ENCODE measurements at regions of chr5 and their contacts with region 1.

Region 1: GRCh38 chr5:162641142-162641813 is 573.7 kb downstream of the GABRG2 start:
- DNase-seq: no peak
- H3K4me3 ChIP-seq: no peak overlapping the region
- H3K27ac ChIP-seq: no peak overlapping the region
- H3K4me1 ChIP-seq: no peaks in the 10 kb centered on the region
- H3K27me3 ChIP-seq: no peaks in the 10 kb centered on the region
- CTCF ChIP-seq: no peak
- EP300 ChIP-seq: no peak
- POLR2A ChIP-seq: no peak

Region 2: DNA sequence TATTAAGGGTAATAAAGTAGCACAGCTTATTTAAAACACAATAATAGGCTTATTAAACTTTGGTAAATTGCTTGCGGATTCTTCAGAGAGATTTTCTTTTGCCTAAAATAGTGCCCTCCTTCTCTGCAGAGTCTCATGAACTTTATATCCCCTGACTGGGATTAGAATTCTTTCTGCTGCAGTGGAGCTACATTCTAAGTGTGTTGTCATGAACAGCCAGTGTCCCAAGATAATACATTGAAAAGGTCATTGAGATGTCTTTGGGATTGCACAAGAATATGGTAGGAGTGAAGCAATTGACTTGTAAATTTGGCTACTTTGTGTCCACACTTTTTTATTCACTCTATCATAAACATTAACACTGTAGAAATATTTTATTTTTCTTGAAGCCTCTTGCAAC is 30.8 kb after region 1 on chr5:
- in situ Hi-C with region 1: no loop called
- intact Hi-C with region 1: loop called (anchors 1 kb)
- DNase-seq: no peak
- H3K4me3 ChIP-seq: no peak overlapping the region
- H3K27ac ChIP-seq: no peak overlapping the region
- H3K4me1 ChIP-seq: no peaks in the 10 kb centered on the region
- H3K27me3 ChIP-seq: no peaks in the 10 kb centered on the region
- CTCF ChIP-seq: no peak
- EP300 ChIP-seq: no peak
- POLR2A ChIP-seq: no peak

Measured in transverse colon (tissue), 4 donors.